ENCODE measurements at regions of chr5 and their contacts with region 1.

Region 1: GRCh38 chr5:102296178-102296817 is at the start of gene SLCO4C1:
- DNase-seq: peak; percentile 83
- ATAC-seq: peak; percentile 97
- H3K4me3 Mint-ChIP-seq: peak within 1 kb of the TSS; percentile 83
- H3K27ac Mint-ChIP-seq: peak within 1 kb of the TSS; percentile 80
- H3K4me1 Mint-ChIP-seq: peaks cover 25% of the 10 kb centered on the region
- H3K27me3 Mint-ChIP-seq: peaks cover 9% of the 10 kb centered on the region
- total RNA-seq, gene SLCO4C1: 0.74 to 0.76 TPM

Region 2: GRCh38 chr5:102262688-102263087 is 33.6 kb before region 1 on chr5:
- CTCF ChIA-PET with region 1: no interaction called
- POLR2A ChIA-PET with region 1: no interaction called
- DNase-seq: no peak
- ATAC-seq: no peak
- H3K4me3 Mint-ChIP-seq: no peak overlapping the region
- H3K27ac Mint-ChIP-seq: no peak overlapping the region
- H3K4me1 Mint-ChIP-seq: no peaks in the 10 kb centered on the region
- H3K27me3 Mint-ChIP-seq: no peaks in the 10 kb centered on the region

Region 3: DNA sequence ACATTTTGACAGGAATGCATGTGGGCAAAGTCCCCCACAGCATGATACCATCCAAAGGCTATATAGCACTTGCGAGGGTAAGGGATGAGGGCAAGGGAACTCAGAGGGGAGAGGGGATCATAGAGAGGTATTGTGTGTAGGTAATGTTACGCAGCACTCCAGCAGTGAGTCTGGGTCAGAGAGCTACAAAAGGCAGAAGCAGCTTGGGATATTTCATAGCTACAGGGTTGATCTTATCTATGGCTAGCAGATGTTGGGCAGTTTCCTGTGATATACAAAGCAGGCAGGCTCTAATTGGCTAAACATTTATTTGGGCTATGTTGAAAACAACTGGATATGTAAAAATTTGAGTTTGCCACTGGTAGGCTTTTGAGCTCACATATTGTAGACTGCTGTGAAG is 17.6 kb after region 1 on chr5:
- CTCF ChIA-PET with region 1: interaction called, 10 read pairs
- POLR2A ChIA-PET with region 1: no interaction called
- DNase-seq: no peak
- ATAC-seq: no peak
- H3K4me3 Mint-ChIP-seq: no peak overlapping the region
- H3K27ac Mint-ChIP-seq: no peak overlapping the region
- H3K4me1 Mint-ChIP-seq: no peaks in the 10 kb centered on the region
- H3K27me3 Mint-ChIP-seq: peaks cover 2% of the 10 kb centered on the region